Activated CD4-positive, alpha-beta T cell treated with anti-CD3 and anti-CD28 coated beads for 36 hours (primary cell): ENCODE measurements at regions of chr16 and their contacts with region 1.

Region 1: GRCh38 chr16:84144859-84145639 is at the starts of genes DNAAF1 and HSDL1:
- DNase-seq: peak; percentile 96
- ATAC-seq: peak; percentile 84
- H3K4me3 Mint-ChIP-seq: peak within 1 kb of the TSS; percentile 95
- H3K27ac Mint-ChIP-seq: peak within 1 kb of the TSS; percentile 72
- H3K4me1 Mint-ChIP-seq: peaks cover 12% of the 10 kb centered on the region
- H3K27me3 Mint-ChIP-seq: peaks cover 4% of the 10 kb centered on the region
- total RNA-seq, gene DNAAF1: 0.39 TPM in 1 of 2 experiments, not detected in the other
- total RNA-seq, gene HSDL1: 7.4 to 11.4 TPM

Region 2: DNA sequence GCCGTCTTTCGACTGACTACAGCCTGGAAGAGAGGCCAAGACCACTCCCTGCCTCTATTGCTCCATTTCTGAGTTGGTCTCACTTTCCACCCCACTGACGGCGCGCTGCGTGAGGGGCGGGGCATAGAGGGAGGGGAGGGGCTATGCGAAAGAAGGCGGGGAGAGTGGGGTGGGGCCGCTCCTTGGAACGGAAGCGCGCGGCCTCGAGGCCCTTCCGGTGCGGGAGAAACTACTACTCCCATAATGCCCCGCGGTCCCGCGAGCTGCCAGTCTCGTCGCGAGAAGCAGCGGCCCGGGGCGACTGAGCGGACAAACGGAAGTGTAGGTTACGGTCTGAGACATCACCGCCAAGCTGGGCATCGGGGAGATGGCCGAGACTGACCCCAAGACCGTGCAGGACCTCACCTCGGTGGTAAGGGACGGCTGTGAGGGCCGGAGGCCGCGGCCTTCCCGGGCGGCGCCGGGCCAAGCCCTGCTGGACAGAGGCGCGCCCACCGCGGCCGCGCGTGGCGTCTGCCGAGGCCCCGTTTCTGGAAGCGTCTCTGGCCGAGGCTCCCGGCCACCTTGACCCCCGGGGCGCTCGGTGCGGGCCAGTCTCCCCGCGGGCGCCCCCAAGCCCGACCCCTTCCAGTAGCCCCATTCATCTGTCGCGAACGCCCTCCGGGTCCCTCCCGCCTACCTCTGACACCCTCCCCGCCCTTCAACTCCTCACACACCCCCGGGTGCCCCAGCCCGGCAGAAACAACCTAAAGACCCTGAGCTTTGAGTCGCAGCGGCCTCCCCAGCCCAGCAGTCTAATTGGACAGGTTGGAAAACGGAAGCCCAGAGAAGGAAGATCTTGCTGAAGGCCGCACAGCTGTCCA is 337.1 kb before region 1 on chr16 and contains the start of gene HSBP1:
- CTCF ChIA-PET with region 1: no interaction called
- POLR2A ChIA-PET with region 1: no interaction called
- intact Hi-C with region 1: loop called in 1 of 2 experiments (anchors 2 kb)
- DNase-seq: peak; percentile 97
- ATAC-seq: peak; percentile 98
- H3K4me3 Mint-ChIP-seq: peak within 1 kb of the TSS; percentile 98
- H3K27ac Mint-ChIP-seq: peak within 1 kb of the TSS; percentile 93
- H3K4me1 Mint-ChIP-seq: peaks cover 31% of the 10 kb centered on the region
- H3K27me3 Mint-ChIP-seq: peaks cover under 1% of the 10 kb centered on the region
- total RNA-seq, gene HSBP1: 73.1 to 80.7 TPM

Region 3: DNA sequence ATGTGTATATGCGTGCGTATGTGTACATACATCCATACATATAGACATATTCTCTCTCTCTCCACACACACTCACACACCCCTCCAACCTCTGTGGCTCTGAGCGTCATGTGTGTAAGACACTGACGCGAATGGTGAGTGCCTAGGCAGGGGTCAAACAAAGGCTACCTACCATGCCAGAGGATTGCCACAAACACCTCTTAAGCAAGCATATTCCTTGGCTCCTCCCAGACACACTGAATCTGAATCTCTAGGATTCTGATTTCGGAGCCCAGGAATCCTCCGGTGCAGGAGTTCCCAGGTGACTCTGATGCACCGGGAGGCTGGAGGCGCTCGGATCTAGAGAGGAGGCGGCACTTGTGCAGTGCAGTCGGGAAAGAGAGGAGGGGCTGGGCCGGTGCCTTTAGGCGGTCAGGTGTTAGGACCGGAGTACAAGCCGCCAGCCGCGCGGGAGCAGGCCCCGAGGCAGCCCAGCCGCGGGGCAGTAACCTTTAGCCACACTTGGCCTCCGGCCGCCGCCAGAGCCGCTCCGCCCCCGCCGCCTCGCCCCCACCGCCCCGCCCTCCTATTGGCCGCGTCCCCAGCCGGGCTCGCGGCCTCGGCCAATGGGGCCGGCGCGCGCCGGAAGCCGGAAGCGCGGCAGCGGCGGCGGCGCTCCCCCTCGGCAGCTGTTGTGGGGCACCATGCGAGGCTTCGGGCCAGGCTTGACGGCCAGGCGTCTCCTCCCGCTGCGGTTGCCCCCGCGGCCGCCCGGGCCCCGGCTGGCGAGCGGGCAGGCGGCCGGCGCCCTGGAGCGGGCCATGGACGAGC is 246.4 kb before region 1 on chr16 and contains the start of gene MLYCD:
- CTCF ChIA-PET with region 1: no interaction called
- POLR2A ChIA-PET with region 1: no interaction called
- intact Hi-C with region 1: loop called in 1 of 2 experiments (anchors 1 kb)
- DNase-seq: peak; percentile 82
- ATAC-seq: peak; percentile 95
- H3K4me3 Mint-ChIP-seq: peak within 1 kb of the TSS; percentile 96
- H3K27ac Mint-ChIP-seq: peak within 1 kb of the TSS; percentile 83
- H3K4me1 Mint-ChIP-seq: peaks cover 28% of the 10 kb centered on the region
- H3K27me3 Mint-ChIP-seq: peaks cover 3% of the 10 kb centered on the region
- total RNA-seq, gene MLYCD: 3.3 to 3.8 TPM

Region 4: DNA sequence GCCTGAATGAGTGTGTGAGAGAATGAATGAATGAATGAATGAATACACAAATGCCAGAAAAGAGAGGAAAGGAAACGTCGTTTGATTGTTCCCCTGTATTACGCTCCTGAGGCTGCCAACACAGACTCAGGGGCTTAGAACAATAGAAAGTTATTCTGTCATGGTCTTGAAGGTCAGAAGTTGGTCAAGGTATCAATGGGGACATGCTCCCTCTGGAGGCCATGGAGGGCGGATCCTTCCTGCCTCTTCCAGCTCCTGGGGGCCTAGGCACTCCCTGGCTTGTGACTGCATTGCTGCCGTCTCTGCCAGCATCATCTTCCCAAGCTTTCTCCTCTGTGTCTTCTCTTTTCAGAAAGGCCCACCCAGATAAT is 100.9 kb before region 1 on chr16:
- CTCF ChIA-PET with region 1: no interaction called
- POLR2A ChIA-PET with region 1: no interaction called
- intact Hi-C with region 1: no loop called
- DNase-seq: peak; percentile 23
- ATAC-seq: peak; percentile 42
- H3K4me3 Mint-ChIP-seq: no peak overlapping the region
- H3K27ac Mint-ChIP-seq: no peak overlapping the region
- H3K4me1 Mint-ChIP-seq: no peaks in the 10 kb centered on the region
- H3K27me3 Mint-ChIP-seq: peaks cover 12% of the 10 kb centered on the region

Region 5: DNA sequence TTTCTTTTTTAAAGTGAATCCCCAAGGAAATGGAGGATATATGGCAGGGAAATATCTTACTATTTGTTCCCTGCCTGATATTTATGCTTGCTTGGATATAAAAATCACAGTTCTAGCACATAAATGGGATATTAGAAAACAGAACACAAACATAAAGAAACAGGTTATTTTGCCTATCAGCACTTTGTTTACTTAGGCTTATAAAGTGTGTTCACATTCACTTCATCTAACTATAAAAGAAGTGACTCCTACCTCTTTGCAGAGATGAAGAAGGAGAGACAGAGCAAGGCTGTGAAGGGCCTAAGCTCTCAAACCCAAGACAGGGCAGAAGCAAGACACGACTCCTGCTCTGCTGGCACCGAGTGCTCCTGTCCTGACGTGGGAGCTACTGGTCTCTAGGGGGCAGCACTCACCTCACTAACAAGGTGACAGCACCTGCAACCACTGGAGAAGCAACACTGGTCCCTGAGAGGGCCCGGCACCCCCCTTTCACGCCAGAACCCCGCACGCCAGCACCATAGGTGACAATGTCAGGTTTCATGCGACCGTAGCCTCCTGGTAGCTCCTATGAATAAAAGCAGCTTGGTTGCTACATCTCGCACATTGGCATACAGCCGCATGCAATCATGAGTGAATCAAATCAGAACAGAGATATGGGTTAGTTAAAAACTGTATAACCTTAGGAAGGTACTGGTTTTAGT is 60.3 kb before region 1 on chr16:
- CTCF ChIA-PET with region 1: interaction called, 4 read pairs
- POLR2A ChIA-PET with region 1: no interaction called
- intact Hi-C with region 1: loop called in 1 of 2 experiments (anchors 1 kb)
- DNase-seq: peak; percentile 83
- ATAC-seq: peak; percentile 79
- H3K4me3 Mint-ChIP-seq: no peak overlapping the region
- H3K27ac Mint-ChIP-seq: no peak overlapping the region
- H3K4me1 Mint-ChIP-seq: peaks cover 40% of the 10 kb centered on the region
- H3K27me3 Mint-ChIP-seq: no peaks in the 10 kb centered on the region

Region 6: GRCh38 chr16:84096115-84097012 is 48.7 kb before region 1 on chr16:
- CTCF ChIA-PET with region 1: no interaction called
- POLR2A ChIA-PET with region 1: no interaction called
- intact Hi-C with region 1: loop called in 1 of 2 experiments (anchors 1 kb)
- DNase-seq: no peak
- ATAC-seq: no peak
- H3K4me3 Mint-ChIP-seq: no peak overlapping the region
- H3K27ac Mint-ChIP-seq: no peak overlapping the region
- H3K4me1 Mint-ChIP-seq: peaks cover 21% of the 10 kb centered on the region
- H3K27me3 Mint-ChIP-seq: no peaks in the 10 kb centered on the region

Region 7: DNA sequence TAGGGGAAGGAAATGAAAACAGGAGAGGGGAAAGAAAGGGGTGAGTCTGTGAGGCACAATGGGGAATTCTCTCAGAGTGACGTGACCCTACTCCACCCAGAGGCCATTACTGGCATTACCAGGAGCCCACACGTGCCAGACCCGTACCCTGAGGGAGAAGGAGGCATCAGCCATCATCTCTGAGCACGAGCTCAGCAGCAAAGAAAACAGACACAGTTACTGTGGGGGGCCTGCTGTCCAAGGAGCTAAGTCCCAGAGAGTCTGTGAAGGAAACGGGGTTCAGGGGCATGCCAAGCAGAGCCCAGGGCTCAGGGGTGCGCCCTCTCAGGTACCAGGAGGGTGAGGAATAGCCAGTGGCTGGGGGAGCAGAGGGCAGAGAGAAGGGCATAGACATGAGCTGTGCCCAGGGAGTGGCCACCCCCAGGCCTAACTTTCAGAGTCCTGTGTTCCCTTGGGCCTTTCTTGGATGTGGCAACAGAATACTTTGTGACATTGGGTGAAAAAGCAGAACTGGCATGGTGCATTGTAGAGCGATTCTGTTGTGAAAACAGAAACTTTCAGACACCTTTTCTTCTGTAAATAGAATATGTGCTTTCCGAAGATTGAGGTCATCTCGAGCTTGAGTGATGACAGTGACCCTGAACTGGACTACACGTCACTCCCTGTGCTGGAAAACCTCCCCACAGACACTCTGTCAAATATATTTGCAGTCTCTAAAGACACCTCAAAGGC is 30.5 kb after region 1 on chr16:
- CTCF ChIA-PET with region 1: interaction called, 4 read pairs
- POLR2A ChIA-PET with region 1: no interaction called
- intact Hi-C with region 1: loop called in 1 of 2 experiments (anchors 5 kb)
- DNase-seq: peak; percentile 81
- ATAC-seq: peak; percentile 93
- H3K4me3 Mint-ChIP-seq: no peak overlapping the region
- H3K27ac Mint-ChIP-seq: no peak overlapping the region
- H3K4me1 Mint-ChIP-seq: peaks cover 19% of the 10 kb centered on the region
- H3K27me3 Mint-ChIP-seq: peaks cover 2% of the 10 kb centered on the region